GM10248 (cell line): ENCODE measurements at regions of chr15 and their contacts with region 1.

Region 1: GRCh38 chr15:40323239-40323952 is at the start of gene INAFM2:
- DNase-seq: peak; percentile 96
- CTCF ChIP-seq: peak; percentile 40

Region 2: DNA sequence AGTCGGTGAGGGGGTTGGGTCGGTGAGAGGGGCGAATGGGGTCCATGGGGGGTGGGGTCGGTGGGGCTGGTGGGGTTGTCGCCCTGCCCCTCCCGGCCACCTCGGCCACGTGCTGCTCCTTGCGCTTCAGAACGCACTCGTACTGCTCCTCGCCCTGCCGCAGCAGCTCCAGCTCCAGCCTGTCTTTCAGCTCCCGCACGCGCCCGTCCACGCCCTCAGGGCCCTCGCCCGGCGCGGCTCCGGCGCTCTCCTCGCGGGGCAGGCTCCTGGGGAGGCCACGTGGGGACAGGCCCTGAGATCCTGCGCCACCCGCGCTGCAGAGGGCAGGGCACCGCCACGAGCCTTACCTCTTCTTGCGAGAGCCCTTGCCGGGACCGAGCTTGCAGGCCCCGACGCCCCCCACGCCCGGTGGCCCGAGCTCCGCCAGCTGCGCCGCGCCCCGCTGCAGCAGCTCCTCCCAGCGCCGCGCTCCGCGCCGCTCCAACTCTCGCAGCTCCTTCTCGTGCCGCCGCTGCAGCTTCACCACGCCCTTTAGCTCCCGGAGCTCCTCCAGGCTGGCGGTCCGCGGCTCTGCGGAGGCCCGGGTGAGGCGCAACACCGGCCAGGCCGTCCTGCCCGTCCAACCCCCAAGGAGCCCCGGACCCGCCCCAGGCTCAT is 32.4 kb before region 1 on chr15:
- CTCF ChIA-PET with region 1: interaction called, 10 read pairs
- POLR2A ChIA-PET with region 1: no interaction called
- DNase-seq: no peak
- CTCF ChIP-seq: no peak